MCF 10A (cell line): ENCODE measurements at regions of chr1 and their contacts with region 1.

Region 1: GRCh38 chr1:36450270-36450918 is at the start of gene OSCP1:
- DNase-seq: peak; percentile 97
- H3K4me3 Mint-ChIP-seq: peak within 1 kb of the TSS; percentile 89
- H3K27ac Mint-ChIP-seq: peak within 1 kb of the TSS; percentile 99
- H3K4me1 Mint-ChIP-seq: peaks cover 24% of the 10 kb centered on the region
- H3K27me3 Mint-ChIP-seq: no peaks in the 10 kb centered on the region
- CTCF ChIP-seq: no peak
- total RNA-seq, gene OSCP1: 7.6 and 15.1 TPM in 2 replicates

Region 2: GRCh38 chr1:36463803-36464604 is 13.6 kb after region 1 on chr1 and contains the start of gene MRPS15:
- CTCF ChIA-PET with region 1: interaction called, 4 read pairs
- POLR2A ChIA-PET with region 1: interaction called, 47 read pairs
- intact Hi-C with region 1: no loop called
- DNase-seq: peak; percentile 95
- H3K4me3 Mint-ChIP-seq: peak within 1 kb of the TSS; percentile 99
- H3K27ac Mint-ChIP-seq: peak within 1 kb of the TSS; percentile 97
- H3K4me1 Mint-ChIP-seq: peaks cover 15% of the 10 kb centered on the region
- H3K27me3 Mint-ChIP-seq: no peaks in the 10 kb centered on the region
- CTCF ChIP-seq: no peak
- total RNA-seq, gene MRPS15: 95.6 and 101 TPM in 2 replicates